Activated CD4-positive, alpha-beta memory T cell treated with anti-CD3 and anti-CD28 coated beads, Interleukin-2, amount 10 ng/mL, durations not matched to agents 7 days and 5 days (primary cell): ENCODE measurements at regions of chr6 and their contacts with region 1.

Region 1: DNA sequence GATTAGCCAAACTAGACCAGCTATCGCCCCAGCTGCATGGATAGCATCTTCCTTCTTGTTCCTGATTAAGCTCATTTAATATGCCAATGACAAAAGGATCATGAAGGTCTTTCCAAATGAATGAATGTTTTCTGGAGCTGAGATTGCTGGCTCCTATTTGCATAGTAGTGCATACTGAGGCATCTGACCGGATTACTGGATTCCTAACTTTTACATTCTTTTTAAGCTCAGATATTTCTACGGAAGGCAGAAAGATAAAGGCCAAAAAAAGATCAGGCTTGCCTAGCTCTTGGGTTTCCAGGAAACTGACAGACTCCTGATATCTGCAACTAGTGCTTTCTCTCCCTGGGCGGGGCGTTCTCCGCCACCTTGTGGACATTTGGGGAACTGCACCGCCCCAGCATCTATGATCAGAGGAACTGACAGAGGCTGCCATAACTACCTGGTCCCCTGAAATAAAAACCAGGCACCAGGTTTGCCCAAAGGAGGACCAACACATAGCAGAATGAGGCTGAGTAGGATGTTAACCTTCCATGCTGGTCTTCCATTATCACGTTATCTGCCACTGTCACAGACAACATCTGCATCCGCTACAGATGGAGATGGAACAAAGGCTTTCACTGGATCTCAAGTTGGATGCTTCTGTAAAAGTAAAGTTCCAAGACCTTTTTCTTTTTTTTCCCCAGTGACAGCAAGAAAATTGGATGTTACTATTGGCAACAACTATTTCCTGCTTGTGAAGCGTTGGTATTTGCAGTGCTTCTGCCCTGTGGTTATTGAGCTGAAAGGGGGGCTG is 33.2 kb downstream of the NT5E start:
- DNase-seq: peak; percentile 83
- H3K4me3 Mint-ChIP-seq: no peak overlapping the region
- H3K27ac Mint-ChIP-seq: no peak overlapping the region
- H3K4me1 Mint-ChIP-seq: peaks cover 8% of the 10 kb centered on the region
- H3K27me3 Mint-ChIP-seq: no peaks in the 10 kb centered on the region

Region 2: GRCh38 chr6:85360794-85361642 is 122.1 kb before region 1 on chr6:
- CTCF ChIA-PET with region 1: interaction called, 71 read pairs
- POLR2A ChIA-PET with region 1: no interaction called
- DNase-seq: no peak
- H3K4me3 Mint-ChIP-seq: no peak overlapping the region
- H3K27ac Mint-ChIP-seq: no peak overlapping the region
- H3K4me1 Mint-ChIP-seq: no peaks in the 10 kb centered on the region
- H3K27me3 Mint-ChIP-seq: no peaks in the 10 kb centered on the region

Region 3: GRCh38 chr6:85385636-85386315 is 97.3 kb before region 1 on chr6:
- CTCF ChIA-PET with region 1: interaction called, 14 read pairs
- POLR2A ChIA-PET with region 1: no interaction called
- DNase-seq: no peak
- H3K4me3 Mint-ChIP-seq: no peak overlapping the region
- H3K27ac Mint-ChIP-seq: no peak overlapping the region
- H3K4me1 Mint-ChIP-seq: peaks cover 1% of the 10 kb centered on the region
- H3K27me3 Mint-ChIP-seq: peaks cover 5% of the 10 kb centered on the region

Region 4: DNA sequence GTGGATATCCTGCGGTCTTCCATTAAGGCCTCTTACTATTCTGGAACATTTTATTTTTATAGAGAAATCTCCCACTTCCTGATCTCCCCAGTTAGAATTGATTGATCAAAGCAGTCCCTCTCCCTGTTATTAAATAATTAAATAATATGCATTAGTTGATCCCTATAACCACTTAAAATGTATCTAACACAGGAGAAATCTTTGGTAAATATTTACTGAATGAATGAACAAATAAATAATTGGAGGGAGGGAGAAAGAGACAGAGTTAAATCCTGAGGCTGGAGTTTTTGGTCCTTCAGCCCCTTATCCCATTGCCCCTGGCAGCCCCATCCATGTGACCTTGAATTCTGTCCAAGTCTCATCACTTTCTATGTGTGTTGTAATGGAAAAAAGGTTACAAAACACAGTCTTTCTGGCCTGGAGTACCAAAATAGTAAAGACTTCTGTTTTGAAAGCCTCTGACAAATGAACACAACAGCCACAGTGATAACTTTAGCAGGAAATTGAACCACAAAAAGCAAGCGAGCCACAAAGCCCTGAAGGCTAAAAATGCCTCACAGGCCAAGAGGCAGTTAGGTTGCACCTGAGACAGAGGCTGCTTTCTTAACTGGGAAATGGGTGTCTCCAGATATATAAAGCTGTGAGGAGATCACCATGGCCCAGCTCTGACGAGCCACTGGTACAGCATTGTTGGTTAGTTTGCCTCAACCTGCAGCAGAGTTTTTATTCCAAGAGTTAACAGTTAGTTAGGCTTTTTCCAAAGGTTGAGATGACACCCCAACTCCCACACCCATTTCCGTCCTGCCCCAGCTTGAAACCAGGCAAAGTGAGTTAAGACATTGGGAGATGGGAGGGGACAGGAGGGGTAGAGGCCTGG is 21.9 kb before region 1 on chr6:
- CTCF ChIA-PET with region 1: interaction called, 35 read pairs
- POLR2A ChIA-PET with region 1: interaction called, 5 read pairs
- DNase-seq: peak; percentile 68
- H3K4me3 Mint-ChIP-seq: no peak overlapping the region
- H3K27ac Mint-ChIP-seq: peak overlapping the region; percentile 81
- H3K4me1 Mint-ChIP-seq: peaks cover 71% of the 10 kb centered on the region
- H3K27me3 Mint-ChIP-seq: peaks cover 23% of the 10 kb centered on the region

Region 5: DNA sequence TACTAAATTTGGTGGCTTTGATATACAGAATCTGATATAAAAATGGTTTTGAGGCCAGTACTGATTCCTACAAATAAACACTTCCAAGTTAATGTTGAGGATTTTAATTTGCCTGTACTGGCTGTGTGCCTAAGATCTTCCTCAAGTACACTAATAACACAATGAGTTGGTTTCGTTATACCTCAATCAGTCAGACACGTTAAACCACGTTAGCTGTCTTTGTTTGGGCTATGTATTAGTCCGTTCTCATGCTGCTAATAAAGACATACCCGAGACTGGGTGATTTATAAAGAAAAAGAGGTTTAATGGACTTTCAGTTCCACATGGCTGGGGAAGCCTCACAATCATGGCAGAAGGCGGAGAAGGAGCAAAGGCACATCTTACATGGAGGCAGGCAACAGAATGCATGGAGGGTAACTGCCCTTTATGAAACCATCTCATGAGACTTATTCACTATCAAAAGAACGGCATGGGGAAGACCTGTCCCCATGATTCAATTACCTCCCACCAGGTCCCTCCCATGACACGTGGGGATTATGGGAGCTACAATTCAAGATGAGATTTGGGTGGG is 13.0 kb after region 1 on chr6:
- CTCF ChIA-PET with region 1: interaction called, 31 read pairs
- POLR2A ChIA-PET with region 1: no interaction called
- DNase-seq: no peak
- H3K4me3 Mint-ChIP-seq: no peak overlapping the region
- H3K27ac Mint-ChIP-seq: no peak overlapping the region
- H3K4me1 Mint-ChIP-seq: peaks cover 8% of the 10 kb centered on the region
- H3K27me3 Mint-ChIP-seq: no peaks in the 10 kb centered on the region